Heart right ventricle (tissue), 16 donors: ENCODE measurements at regions of chr4 and their contacts with region 1.

Region 1: DNA sequence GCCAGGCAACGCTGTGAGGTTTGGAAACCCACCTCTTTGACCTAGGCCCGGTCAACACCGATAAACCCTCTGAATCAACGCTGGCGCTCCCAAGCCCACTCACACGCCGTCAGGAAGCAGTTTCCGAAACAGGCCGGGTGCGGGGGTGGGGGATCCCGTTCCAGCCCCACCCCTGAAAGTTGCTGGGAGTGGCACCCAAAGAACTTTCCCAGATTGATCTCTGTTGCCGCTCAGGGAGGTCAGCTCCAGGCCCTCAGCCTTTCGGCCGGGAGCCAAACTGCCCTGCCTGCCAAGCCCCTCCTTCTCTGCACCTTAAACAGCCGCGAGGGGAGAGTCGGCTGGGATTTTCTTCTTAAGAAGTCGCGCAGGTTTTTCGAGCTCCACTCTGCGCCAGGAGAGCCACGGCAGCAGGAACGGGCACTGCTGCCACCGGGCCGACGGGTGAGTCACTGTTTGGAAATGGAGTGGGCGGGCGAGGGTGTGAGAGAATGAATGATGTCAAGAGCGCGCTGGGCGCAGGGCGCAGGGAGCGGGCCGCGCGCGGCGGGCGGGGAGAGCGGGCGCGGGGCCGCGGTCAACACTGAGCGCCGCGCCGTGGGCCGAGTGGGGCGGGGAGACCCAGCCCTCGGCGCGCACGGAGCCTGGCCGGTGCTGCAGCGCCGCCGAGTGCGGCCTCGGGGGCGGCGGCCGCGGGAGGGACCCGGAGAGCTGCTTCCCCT is at the start of gene SGMS2:
- DNase-seq: peak; percentile 80 to 87
- ATAC-seq: peak; percentile 90 to 97 (median 92)
- H3K4me3 ChIP-seq: peak within 1 kb of the TSS; percentile 67 to 96 (median 82)
- H3K27ac ChIP-seq: peak within 1 kb of the TSS; percentile 61 to 95 (median 93)
- H3K4me1 ChIP-seq: peaks cover 0 to 40% (median 26%) of the 10 kb centered on the region in 9 donors
- H3K27me3 ChIP-seq: peaks cover 0 to 12% (median 0%) of the 10 kb centered on the region in 7 donors
- CTCF ChIP-seq: peak in 3 of 9 donors; percentile 12 to 37 (median 28)
- total RNA-seq, gene SGMS2: 14.3 to 36.9 (median 25.8) TPM

Region 2: GRCh38 chr4:107669068-107669467 is 155.4 kb before region 1 on chr4:
- intact Hi-C with region 1: no loop called
- DNase-seq: no peak
- ATAC-seq: no peak
- H3K4me3 ChIP-seq: no peak overlapping the region
- H3K27ac ChIP-seq: no peak overlapping the region
- H3K4me1 ChIP-seq: peaks cover 0 to 13% (median 0%) of the 10 kb centered on the region in 9 donors
- H3K27me3 ChIP-seq: no peaks in the 10 kb centered on the region
- CTCF ChIP-seq: no peak

Region 3: GRCh38 chr4:107757864-107758476 is 66.5 kb before region 1 on chr4:
- intact Hi-C with region 1: loop called in 3 of 10 experiments (anchors 5 kb)
- DNase-seq: no peak
- ATAC-seq: peak in 1 of 8 donors; percentile 42
- H3K4me3 ChIP-seq: no peak overlapping the region
- H3K27ac ChIP-seq: no peak overlapping the region
- H3K4me1 ChIP-seq: peaks cover 0 to 10% (median 0%) of the 10 kb centered on the region in 9 donors
- H3K27me3 ChIP-seq: no peaks in the 10 kb centered on the region
- CTCF ChIP-seq: peak in 8 of 9 donors; percentile 42 to 75 (median 58)

Region 4: DNA sequence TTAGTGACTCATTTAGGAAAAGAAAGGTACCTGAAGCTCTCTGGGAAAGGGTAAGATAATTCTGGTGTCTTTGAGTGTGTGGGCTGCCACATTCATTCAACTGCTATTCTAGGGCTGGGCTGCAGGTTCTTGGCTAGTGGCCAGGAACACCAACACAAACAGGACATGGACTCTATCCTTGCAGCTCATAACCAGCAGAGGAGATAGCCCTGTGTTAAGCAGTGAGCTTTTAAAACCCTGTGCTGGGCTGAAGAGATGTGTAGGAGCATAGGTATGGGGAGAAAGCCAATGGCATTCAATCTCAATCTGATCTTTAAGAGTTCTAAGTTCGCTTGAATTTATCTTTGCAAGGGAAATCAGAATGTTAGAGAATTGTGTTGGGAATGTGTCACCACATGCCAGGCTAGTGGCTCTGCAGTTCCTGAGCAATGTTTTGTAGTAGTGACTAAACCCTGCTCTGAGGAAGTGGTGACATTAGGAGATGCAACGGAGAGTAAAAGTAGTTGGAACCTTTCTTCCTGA is 39.4 kb after region 1 on chr4:
- intact Hi-C with region 1: loop called in 2 of 10 experiments (anchors 5 kb)
- DNase-seq: peak; percentile 25 to 67
- ATAC-seq: peak; percentile 79 to 96 (median 93)
- H3K4me3 ChIP-seq: no peak overlapping the region
- H3K27ac ChIP-seq: peak overlapping the region in 9 of 10 donors; percentile 10 to 58 (median 37)
- H3K4me1 ChIP-seq: peaks cover 0 to 32% (median 13%) of the 10 kb centered on the region in 9 donors
- H3K27me3 ChIP-seq: no peaks in the 10 kb centered on the region
- CTCF ChIP-seq: no peak

Region 5: DNA sequence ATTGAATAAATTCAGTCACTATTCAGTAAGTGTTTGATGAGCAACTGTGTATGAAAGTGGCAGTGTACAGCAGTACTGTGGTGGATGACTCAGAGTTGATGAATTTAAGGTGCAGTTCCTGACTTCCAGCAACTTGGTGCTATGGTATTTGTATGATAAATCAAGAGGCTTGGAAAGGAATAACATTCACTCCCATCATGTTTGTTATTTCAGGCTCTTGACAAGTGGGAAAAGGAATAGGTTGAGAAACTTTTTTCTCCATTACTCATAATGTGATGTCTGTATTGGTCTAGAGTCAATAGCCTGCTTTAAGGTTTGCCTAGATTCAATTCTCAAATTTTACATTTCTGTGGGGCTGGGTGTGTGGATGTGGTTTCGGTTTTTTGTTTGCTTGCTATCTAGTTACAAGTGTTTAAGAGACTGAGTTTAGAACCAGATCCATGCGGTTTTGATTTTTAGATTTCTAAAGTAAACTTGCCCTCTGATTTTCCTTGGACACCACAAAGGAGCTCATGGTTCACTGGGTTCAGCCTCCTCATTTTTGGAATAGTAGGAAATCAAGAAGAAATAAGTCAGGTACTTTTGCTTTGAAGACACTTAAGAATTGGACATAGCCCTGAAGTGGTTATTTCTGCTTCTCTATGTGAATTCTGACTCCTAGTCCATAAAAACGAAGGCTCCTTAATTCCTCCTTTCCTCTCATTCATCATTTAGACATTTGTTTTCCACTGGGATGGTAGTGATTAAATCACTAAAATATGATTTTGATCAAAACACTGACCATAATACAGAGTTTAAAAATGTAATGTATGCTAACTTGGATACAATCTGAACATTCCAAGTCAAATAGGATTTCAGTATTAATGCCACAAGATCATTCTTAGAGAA is 71.9 kb after region 1 on chr4:
- intact Hi-C with region 1: loop called in 2 of 10 experiments (anchors 5 kb)
- DNase-seq: no peak
- ATAC-seq: peak in 5 of 8 donors; percentile 39 to 88 (median 70)
- H3K4me3 ChIP-seq: no peak overlapping the region
- H3K27ac ChIP-seq: peak overlapping the region in 2 of 10 donors; percentile 9 to 41
- H3K4me1 ChIP-seq: peaks cover 0 to 32% (median 8%) of the 10 kb centered on the region in 9 donors
- H3K27me3 ChIP-seq: no peaks in the 10 kb centered on the region
- CTCF ChIP-seq: no peak

Region 6: DNA sequence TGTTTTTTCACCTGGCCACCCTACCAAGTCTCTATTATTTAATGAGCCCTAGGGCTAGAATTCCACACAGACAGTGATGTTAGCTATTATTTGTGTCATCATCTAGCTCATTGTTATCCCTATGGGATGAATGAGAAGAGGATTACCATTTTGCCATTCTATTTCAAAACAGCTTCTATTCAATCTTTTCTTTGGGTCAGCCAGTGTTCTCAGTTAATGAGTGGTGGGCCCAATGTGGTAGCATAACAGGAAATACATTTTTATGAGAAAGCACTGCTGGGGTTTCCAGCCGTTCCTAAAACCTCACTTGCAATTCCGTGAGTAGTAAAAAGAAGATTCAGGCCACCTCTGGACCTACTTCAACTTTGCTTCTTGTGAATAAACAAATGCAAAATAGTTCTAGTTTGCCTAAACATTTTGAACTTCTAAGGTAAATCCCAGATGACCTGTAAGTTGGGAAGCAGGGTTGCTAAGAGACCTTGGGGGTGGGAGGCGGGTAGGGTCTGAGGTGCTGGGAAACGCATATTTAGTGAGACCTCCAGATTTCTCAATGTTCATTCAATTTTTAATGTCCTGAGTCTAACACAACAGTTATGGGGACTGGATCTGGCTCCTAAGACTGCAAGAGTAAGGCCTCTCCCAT is 82.1 kb after region 1 on chr4:
- intact Hi-C with region 1: loop called in 7 of 10 experiments (anchors 5 to 10 kb)
- DNase-seq: no peak
- ATAC-seq: no peak
- H3K4me3 ChIP-seq: no peak overlapping the region
- H3K27ac ChIP-seq: no peak overlapping the region
- H3K4me1 ChIP-seq: peaks cover 0 to 16% (median 0%) of the 10 kb centered on the region in 9 donors
- H3K27me3 ChIP-seq: no peaks in the 10 kb centered on the region
- CTCF ChIP-seq: no peak

Region 7: GRCh38 chr4:107913281-107913899 is 88.9 kb after region 1 on chr4:
- intact Hi-C with region 1: loop called in 7 of 10 experiments (anchors 5 to 10 kb)
- DNase-seq: peak in 1 of 2 donors; percentile 67
- ATAC-seq: peak in 7 of 8 donors; percentile 55 to 83 (median 76)
- H3K4me3 ChIP-seq: no peak overlapping the region
- H3K27ac ChIP-seq: no peak overlapping the region
- H3K4me1 ChIP-seq: peaks cover 0 to 4% (median 0%) of the 10 kb centered on the region in 9 donors
- H3K27me3 ChIP-seq: no peaks in the 10 kb centered on the region
- CTCF ChIP-seq: peak; percentile 58 to 92 (median 79)

Region 8: GRCh38 chr4:107989537-107990386 is 165.2 kb after region 1 on chr4 and contains the start of gene HADH:
- intact Hi-C with region 1: loop called in 2 of 10 experiments (anchors 5 to 10 kb)
- DNase-seq: peak; percentile 94 to 95
- ATAC-seq: peak; percentile 98 to 100 (median 99)
- H3K4me3 ChIP-seq: peak within 1 kb of the TSS; percentile 51 to 93 (median 88)
- H3K27ac ChIP-seq: peak within 1 kb of the TSS; percentile 53 to 96 (median 92)
- H3K4me1 ChIP-seq: peaks cover 0 to 57% (median 51%) of the 10 kb centered on the region in 9 donors
- H3K27me3 ChIP-seq: no peaks in the 10 kb centered on the region
- CTCF ChIP-seq: no peak
- total RNA-seq, gene HADH: 163 to 295 (median 238) TPM